Adrenal gland (tissue), 19 donors: ENCODE measurements at regions of chr1 and their contacts with region 1.

Region 1: DNA sequence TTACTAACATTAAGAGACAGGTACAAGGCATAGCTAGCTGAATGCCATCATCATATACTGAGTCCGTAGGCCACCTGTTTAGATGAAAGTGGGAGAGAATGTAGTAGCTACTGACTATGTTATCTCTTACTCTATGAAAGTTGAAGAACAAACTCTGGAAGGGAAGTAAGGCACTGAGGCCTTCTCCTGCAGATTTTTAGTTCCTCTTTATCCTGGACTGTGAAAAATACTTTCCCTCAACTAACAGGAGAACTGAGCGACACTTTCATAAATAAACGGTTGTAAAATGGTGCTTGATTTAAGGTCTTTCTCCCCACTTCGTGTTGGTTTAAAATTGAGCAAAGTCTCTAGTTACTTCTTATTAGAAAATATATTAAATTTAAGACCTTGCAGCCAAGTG is 101.9 kb downstream of the FNBP1L start:
- DNase-seq: no peak
- H3K4me3 ChIP-seq: no peak overlapping the region
- H3K27ac ChIP-seq: no peak overlapping the region
- H3K4me1 ChIP-seq: peaks cover 0 to 22% of the 10 kb centered on the region in 2 donors
- H3K27me3 ChIP-seq: no peaks in the 10 kb centered on the region
- CTCF ChIP-seq: no peak
- POLR2A ChIP-seq: no peak

Region 2: DNA sequence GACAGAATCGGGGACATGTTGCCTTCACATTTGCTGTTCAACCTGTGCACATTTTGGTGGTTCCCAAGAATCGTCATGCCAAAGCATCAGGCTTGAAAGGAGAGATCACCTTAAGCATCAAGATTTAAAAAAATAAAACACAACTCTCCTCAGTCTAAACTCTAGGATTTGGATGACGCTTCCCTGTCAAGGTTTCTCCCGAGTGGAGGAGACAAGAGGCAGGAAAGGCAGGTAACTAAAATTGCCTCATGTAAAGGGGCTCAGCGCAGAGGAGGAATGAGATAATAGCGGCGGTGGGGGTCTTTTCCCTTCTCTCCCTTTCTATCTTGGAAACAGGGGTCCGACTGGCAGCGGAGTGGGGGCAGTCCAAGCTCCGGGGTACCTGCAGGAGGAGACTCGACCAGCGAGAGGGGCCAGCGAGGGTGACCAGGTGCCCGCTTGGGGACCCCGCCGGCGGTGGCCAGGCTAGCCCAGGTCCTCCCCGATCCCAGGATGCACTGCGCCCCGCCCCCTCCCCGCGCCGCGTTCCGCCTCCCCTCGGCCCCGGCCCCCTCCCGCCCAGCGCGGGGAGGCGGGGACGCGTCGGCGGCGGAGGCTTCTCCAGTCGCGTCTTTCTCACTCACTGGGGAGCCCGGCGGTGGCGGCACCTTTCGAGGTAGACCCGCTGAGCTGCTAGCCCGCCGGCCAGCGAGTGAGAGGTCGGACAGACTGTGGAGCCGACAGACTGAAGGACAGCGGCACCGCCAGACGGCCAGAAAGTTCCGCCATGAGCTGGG is 102.1 kb before region 1 on chr1 and contains the start of gene FNBP1L:
- intact Hi-C with region 1: loop called in 1 of 2 experiments (anchors 10 kb)
- DNase-seq: peak; percentile 72 to 84 (median 77)
- H3K4me3 ChIP-seq: peak within 1 kb of the TSS; percentile 42 to 97 (median 81)
- H3K27ac ChIP-seq: peak within 1 kb of the TSS in 4 of 5 donors; percentile 24 to 84 (median 63)
- H3K4me1 ChIP-seq: peaks cover 0 to 15% of the 10 kb centered on the region in 2 donors
- H3K27me3 ChIP-seq: no peaks in the 10 kb centered on the region
- CTCF ChIP-seq: no peak
- POLR2A ChIP-seq: peak in 1 of 2 donors; percentile 71
- total RNA-seq, gene FNBP1L: 6.1 to 21.0 (median 15.5) TPM

Region 3: DNA sequence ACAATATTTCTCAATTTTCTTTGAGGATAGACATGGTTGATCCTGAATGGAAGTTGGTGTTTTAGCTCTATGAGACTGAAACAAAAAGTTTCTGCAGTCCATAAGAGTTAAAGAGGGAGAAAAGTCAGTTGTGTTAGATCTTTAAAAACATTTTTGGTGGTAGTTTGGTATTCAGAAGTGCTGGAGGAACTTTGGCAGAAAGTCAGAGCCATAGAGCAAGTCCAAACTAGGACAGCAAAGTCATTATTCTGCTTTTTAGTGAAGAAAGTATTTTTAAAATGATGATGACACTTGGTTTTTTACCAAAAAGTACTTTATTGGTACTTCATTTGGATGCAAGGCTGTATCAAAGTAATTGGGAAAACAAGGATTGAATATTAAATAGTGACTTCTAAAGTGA is 60.1 kb before region 1 on chr1:
- intact Hi-C with region 1: no loop called
- DNase-seq: no peak
- H3K4me3 ChIP-seq: no peak overlapping the region
- H3K27ac ChIP-seq: no peak overlapping the region
- H3K4me1 ChIP-seq: peaks cover 0 to 26% of the 10 kb centered on the region in 2 donors
- H3K27me3 ChIP-seq: no peaks in the 10 kb centered on the region
- CTCF ChIP-seq: no peak
- POLR2A ChIP-seq: no peak